HepG2 (cell line): ENCODE measurements at regions of chr20 and their contacts with region 1.

Region 1: GRCh38 chr20:63116412-63117099 is 99.4 kb downstream of the YTHDF1 start:
- DNase-seq: no peak
- ATAC-seq: peak; percentile 28; the same call in 1 of the 3 replicates
- H3K4me3 ChIP-seq: no peak overlapping the region
- H3K27ac ChIP-seq: no peak overlapping the region
- H3K4me1 ChIP-seq: no peaks in the 10 kb centered on the region
- H3K27me3 ChIP-seq: peaks cover 7 to 80% of the 10 kb centered on the region in 2 experiments; a peak in 4 of 5 replicates
- CTCF ChIP-seq: no peak
- EP300 ChIP-seq: no peak
- POLR2A ChIP-seq: no peak
- RAD21 ChIP-seq: no peak

Region 2: DNA sequence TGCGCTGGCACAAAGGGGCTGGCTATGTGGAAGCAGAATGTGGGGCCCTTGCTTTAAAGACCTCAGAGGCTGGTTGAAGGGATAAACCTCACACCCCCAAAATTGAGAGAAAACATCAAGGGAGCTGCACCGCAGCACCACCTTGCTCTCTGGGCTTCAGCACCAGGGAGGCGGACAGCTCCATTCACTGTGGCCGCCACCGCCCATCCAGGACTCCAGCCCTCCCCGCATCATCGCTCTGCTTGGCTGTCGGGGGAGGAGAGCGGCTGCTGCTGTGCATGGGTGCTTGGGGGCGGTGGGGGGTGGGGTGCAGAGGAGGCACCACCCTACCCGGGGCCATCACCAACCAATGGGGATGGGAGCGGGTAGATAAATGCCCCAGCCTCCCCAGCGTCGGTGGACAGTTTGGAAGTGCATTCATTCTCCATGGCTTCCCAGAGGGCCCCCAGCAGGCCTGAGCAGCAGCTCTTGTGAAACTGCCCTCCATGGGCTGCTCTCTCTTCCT is 34.2 kb before region 1 on chr20:
- CTCF ChIA-PET with region 1: no interaction called
- POLR2A ChIA-PET with region 1: no interaction called
- in situ Hi-C with region 1: no loop called
- intact Hi-C with region 1: no loop called
- DNase-seq: peak; percentile 33
- ATAC-seq: peak; percentile 57
- H3K4me3 ChIP-seq: no peak overlapping the region
- H3K27ac ChIP-seq: no peak overlapping the region
- H3K4me1 ChIP-seq: peaks cover 24% of the 10 kb centered on the region
- H3K27me3 ChIP-seq: peaks cover 26 to 50% of the 10 kb centered on the region in 2 experiments
- CTCF ChIP-seq: 0 out of 2 replicates have a peak, but pooled peaks have one; percentile 6
- EP300 ChIP-seq: no peak
- POLR2A ChIP-seq: no peak
- RAD21 ChIP-seq: peak; percentile 9; the same call in 1 of the 2 replicates

Region 3: GRCh38 chr20:63151554-63152326 is 35.2 kb after region 1 on chr20:
- CTCF ChIA-PET with region 1: no interaction called
- POLR2A ChIA-PET with region 1: no interaction called
- in situ Hi-C with region 1: no loop called
- intact Hi-C with region 1: loop called (anchors 2 kb)
- DNase-seq: no peak
- ATAC-seq: no peak
- H3K4me3 ChIP-seq: no peak overlapping the region
- H3K27ac ChIP-seq: no peak overlapping the region
- H3K4me1 ChIP-seq: no peaks in the 10 kb centered on the region
- H3K27me3 ChIP-seq: peaks cover 26 to 85% of the 10 kb centered on the region in 2 experiments
- CTCF ChIP-seq: no peak
- EP300 ChIP-seq: no peak
- POLR2A ChIP-seq: no peak
- RAD21 ChIP-seq: no peak